B cell (primary cell): ENCODE measurements at regions of chr15 and their contacts with region 1.

Region 1: GRCh38 chr15:41827880-41828806 is at the start of gene JMJD7:
- DNase-seq: peak; percentile 93
- ATAC-seq: peak; percentile 99
- H3K4me3 ChIP-seq: peak within 1 kb of the TSS; percentile 54 to 95 (median 87)
- H3K4me3 Mint-ChIP-seq: peak within 1 kb of the TSS; percentile 86
- H3K27ac ChIP-seq: peak within 1 kb of the TSS; percentile 32 to 53
- H3K27ac Mint-ChIP-seq: peak within 1 kb of the TSS; percentile 63
- H3K4me1 ChIP-seq: peaks cover 16 to 28% of the 10 kb centered on the region in 2 donors
- H3K4me1 Mint-ChIP-seq: peaks cover 26% of the 10 kb centered on the region
- H3K27me3 ChIP-seq: no peaks in the 10 kb centered on the region
- H3K27me3 Mint-ChIP-seq: no peaks in the 10 kb centered on the region
- CTCF ChIP-seq: no peak
- total RNA-seq, gene JMJD7: 41.1 and 43.9 TPM in 2 replicates

Region 2: DNA sequence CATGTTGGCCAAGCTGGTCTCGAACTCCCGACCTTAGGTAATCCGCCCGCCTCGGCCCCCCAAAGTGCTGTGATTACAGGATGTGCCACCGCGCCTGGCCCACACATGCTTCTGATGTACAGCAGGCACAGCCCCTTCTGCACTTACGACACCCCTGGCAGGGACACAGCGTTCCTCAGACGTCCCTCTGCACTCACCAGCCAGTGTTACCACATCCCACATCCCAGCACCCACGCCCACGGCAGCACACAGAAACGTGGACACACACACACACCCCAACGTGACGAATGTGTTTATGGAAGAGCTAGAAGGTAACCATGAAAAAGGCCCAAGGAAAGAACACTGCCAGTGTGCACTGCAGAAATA is 283.5 kb before region 1 on chr15:
- CTCF ChIA-PET with region 1: no interaction called
- POLR2A ChIA-PET with region 1: no interaction called
- intact Hi-C with region 1: loop called (anchors 5 kb)
- DNase-seq: no peak
- ATAC-seq: no peak
- H3K4me3 ChIP-seq: peak overlapping the region in 4 of 5 experiments; percentile 69 to 92 (median 84)
- H3K4me3 Mint-ChIP-seq: peak overlapping the region; percentile 97
- H3K27ac ChIP-seq: no peak overlapping the region
- H3K27ac Mint-ChIP-seq: peak overlapping the region; percentile 42
- H3K4me1 ChIP-seq: peaks cover 6 to 11% of the 10 kb centered on the region in 2 donors
- H3K4me1 Mint-ChIP-seq: peaks cover 10% of the 10 kb centered on the region
- H3K27me3 ChIP-seq: no peaks in the 10 kb centered on the region
- H3K27me3 Mint-ChIP-seq: no peaks in the 10 kb centered on the region
- CTCF ChIP-seq: no peak

Region 3: GRCh38 chr15:41894791-41895463 is 66.8 kb after region 1 on chr15:
- CTCF ChIA-PET with region 1: interaction called, 4 read pairs
- POLR2A ChIA-PET with region 1: interaction called, 4 read pairs
- intact Hi-C with region 1: loop called (anchors 1 kb)
- DNase-seq: peak; percentile 84
- ATAC-seq: peak; percentile 98
- H3K4me3 ChIP-seq: peak overlapping the region in 4 of 5 experiments; percentile 10 to 47 (median 30)
- H3K4me3 Mint-ChIP-seq: peak overlapping the region; percentile 84
- H3K27ac ChIP-seq: peak overlapping the region; percentile 71 to 80
- H3K27ac Mint-ChIP-seq: peak overlapping the region; percentile 97
- H3K4me1 ChIP-seq: peaks cover 37 to 41% of the 10 kb centered on the region in 2 donors
- H3K4me1 Mint-ChIP-seq: peaks cover 40% of the 10 kb centered on the region
- H3K27me3 ChIP-seq: no peaks in the 10 kb centered on the region
- H3K27me3 Mint-ChIP-seq: no peaks in the 10 kb centered on the region
- CTCF ChIP-seq: no peak

Region 4: DNA sequence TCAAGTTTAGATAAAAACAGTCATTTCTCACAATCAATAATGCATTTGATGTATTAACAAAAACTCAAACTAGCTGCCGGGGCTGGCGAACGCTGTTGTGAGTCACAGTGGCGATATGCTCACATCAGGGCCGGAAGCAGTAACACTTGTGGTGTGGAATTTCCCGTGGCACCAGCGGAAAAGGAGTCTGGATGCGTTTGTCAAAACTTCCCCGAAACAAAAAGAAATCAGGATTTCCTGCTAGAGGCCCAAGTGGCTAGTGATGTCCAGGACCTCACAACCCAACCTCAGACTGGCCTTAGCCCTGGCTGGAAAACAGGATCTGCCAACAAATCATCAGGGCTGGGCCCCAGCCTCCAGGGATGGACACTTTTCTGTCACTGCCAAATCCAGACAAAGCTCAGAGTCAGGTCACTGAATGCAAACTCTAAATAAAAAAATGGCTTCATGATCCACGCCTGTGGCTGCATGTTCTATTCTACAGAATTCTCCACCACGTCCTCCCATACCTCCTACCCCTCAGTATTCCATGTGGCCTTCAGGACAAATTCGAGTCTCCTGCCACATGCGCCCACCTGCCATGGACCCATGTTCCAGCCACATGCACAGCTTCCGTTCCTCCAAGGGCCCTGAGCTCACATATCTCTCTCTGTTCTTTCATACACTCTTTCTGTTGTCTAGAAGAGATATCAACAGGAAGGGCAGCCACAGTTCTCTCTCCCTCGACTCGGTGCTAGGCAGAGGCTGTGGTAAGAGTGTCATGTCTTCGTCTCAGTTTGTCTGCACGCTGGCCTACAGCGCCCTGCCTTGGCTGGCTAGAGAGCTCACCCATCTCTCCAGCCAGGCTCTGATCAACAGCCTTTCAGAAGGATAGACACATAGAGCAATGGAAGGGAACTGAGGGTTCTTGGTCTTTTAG is 108.8 kb after region 1 on chr15:
- CTCF ChIA-PET with region 1: no interaction called
- POLR2A ChIA-PET with region 1: no interaction called
- intact Hi-C with region 1: loop called (anchors 1 kb)
- DNase-seq: peak; percentile 41
- ATAC-seq: peak; percentile 70
- H3K4me3 ChIP-seq: no peak overlapping the region
- H3K4me3 Mint-ChIP-seq: no peak overlapping the region
- H3K27ac ChIP-seq: peak overlapping the region; percentile 20 to 78
- H3K27ac Mint-ChIP-seq: peak overlapping the region; percentile 82
- H3K4me1 ChIP-seq: peaks cover 17 to 35% of the 10 kb centered on the region in 2 donors
- H3K4me1 Mint-ChIP-seq: peaks cover 34% of the 10 kb centered on the region
- H3K27me3 ChIP-seq: no peaks in the 10 kb centered on the region
- H3K27me3 Mint-ChIP-seq: no peaks in the 10 kb centered on the region
- CTCF ChIP-seq: no peak